Cardiac septum (tissue), 1 donor: ENCODE measurements at regions of chr7 and their contacts with region 1.

Region 1: DNA sequence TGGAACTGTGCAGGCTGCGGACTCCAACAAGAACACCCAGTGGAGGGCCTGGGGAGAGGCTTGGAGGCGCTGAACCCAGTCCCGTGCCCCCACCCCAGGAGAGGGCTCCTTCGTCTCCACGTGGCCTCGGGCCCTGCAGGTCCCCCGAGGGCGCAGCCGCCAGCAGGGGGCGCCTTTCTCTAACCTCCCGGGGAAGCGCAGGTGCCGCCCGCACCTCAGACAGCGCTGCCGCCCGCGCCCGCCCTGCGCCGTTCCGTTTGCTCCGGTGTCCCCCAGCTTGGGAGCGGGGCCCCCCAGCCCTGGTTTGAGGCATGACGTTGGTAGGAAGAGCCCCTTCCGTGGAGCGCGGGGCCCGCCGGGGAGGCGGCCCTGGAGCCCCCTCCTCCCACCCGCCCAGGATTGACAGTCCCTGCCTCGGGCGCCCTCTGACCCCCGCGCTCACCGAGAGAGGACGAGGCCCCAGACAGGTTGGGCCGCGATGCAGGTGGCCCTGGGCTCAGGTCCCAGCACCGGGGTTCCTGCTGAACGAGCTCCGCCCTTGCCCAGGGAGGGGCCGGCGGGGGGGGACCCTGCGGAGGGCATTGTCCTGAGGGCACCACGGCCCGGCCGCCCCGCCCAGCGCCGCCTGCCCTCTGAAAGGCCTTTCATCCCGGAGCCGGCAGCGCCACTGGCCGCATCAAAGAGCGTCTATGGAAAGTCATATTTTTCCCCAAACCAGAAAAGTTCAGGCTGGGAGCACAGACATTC is 42.8 kb downstream of the FOXL3 start:
- DNase-seq: no peak

Region 2: GRCh38 chr7:318878-319661 is 13.7 kb before region 1 on chr7:
- intact Hi-C with region 1: no loop called
- DNase-seq: no peak

Region 3: GRCh38 chr7:503575-504111 is 170.8 kb after region 1 on chr7:
- intact Hi-C with region 1: no loop called
- DNase-seq: no peak

Region 4: GRCh38 chr7:636396-636795 is 303.6 kb after region 1 on chr7:
- intact Hi-C with region 1: loop called (anchors 2 kb)
- DNase-seq: no peak